ENCODE measurements at regions of chr7 and their contacts with region 1.

Region 1: DNA sequence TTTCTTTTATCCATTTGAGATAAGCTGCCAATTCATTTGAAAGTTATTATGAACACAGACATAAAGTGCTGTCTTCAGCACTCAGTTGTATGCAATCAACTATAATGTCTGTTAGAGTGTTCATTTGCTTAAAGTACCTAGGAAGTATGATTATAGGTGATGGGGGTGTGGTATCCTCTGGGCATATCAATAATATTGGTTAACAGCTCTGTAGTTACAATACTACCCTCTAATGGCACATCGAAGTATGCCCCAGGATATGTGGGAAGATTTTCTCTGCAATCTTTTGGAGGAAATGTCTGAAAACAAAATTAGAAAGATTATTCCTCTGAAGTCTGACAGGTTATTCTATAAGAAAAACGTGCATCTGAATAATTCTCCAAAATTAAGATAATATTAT is 429.7 kb downstream of the ARL4A start:
- DNase-seq: no peak
- H3K4me3 ChIP-seq: no peak overlapping the region
- H3K27ac ChIP-seq: no peak overlapping the region
- H3K4me1 ChIP-seq: peaks cover 7% of the 10 kb centered on the region
- H3K27me3 ChIP-seq: no peaks in the 10 kb centered on the region
- CTCF ChIP-seq: peak; percentile 42 to 63

Region 2: DNA sequence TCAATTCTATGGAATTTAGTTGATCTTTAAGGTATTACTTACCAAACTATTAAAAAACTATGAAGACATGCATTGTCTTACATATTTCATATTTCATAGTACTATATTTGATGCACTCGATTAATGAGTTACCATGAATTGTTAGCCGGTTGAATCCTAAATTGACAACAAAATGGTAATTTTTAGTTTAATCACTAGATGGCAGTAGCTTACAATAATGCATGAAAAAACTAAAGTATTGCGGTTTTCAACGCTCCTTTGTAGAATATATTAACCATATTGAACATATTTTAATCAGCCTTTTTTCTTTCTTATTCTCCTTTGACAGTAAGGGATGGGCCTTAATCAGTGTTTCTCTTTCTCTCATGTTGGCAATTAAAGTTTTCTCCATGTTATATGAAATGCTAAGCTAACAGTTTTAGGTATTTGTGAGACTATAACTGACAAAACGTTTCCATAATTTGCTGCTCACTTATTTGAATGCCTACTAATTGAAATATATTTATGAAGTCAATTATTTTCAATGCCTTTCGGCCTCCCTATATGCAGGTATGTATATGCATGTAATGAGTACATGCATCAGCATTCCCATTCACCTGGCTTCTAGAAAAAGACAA is 478.1 kb before region 1 on chr7:
- CTCF ChIA-PET with region 1: no interaction called
- dilution Hi-C with region 1: no loop called
- in situ Hi-C with region 1: no loop called
- intact Hi-C with region 1: loop called (anchors 1 kb)
- DNase-seq: peak; percentile 32
- H3K4me3 ChIP-seq: no peak overlapping the region
- H3K27ac ChIP-seq: no peak overlapping the region
- H3K4me1 ChIP-seq: no peaks in the 10 kb centered on the region
- H3K27me3 ChIP-seq: no peaks in the 10 kb centered on the region
- CTCF ChIP-seq: peak; percentile 56 to 61

Region 3: GRCh38 chr7:12929476-12930140 is 187.5 kb before region 1 on chr7:
- CTCF ChIA-PET with region 1: no interaction called
- dilution Hi-C with region 1: no loop called
- in situ Hi-C with region 1: no loop called
- intact Hi-C with region 1: loop called (anchors 10 kb)
- DNase-seq: no peak
- H3K4me3 ChIP-seq: no peak overlapping the region
- H3K27ac ChIP-seq: no peak overlapping the region
- H3K4me1 ChIP-seq: peaks cover 3% of the 10 kb centered on the region
- H3K27me3 ChIP-seq: no peaks in the 10 kb centered on the region
- CTCF ChIP-seq: no peak

Region 4: DNA sequence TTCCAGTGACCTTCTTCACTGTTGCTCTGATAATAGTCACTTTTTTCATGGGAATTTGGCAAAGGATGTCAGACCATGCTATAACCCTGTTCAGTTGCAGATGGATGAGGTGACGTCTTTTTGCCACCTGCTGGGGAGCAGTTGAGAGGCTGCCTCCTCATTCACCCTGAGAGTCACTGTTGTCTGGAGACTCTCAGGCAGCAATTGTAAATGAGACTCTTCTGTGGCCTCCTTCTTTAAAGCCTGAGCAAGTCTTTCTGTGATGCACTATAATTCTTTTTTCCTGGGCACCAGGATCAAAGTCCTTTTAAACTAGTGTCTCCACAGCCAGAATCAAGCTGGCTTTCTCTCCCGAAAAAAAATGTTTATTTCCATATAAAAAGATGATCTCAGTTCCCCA is 84.5 kb before region 1 on chr7:
- CTCF ChIA-PET with region 1: no interaction called
- dilution Hi-C with region 1: no loop called
- in situ Hi-C with region 1: no loop called
- intact Hi-C with region 1: no loop called
- DNase-seq: no peak
- H3K4me3 ChIP-seq: no peak overlapping the region
- H3K27ac ChIP-seq: no peak overlapping the region
- H3K4me1 ChIP-seq: peaks cover 26% of the 10 kb centered on the region
- H3K27me3 ChIP-seq: no peaks in the 10 kb centered on the region
- CTCF ChIP-seq: no peak

Region 5: DNA sequence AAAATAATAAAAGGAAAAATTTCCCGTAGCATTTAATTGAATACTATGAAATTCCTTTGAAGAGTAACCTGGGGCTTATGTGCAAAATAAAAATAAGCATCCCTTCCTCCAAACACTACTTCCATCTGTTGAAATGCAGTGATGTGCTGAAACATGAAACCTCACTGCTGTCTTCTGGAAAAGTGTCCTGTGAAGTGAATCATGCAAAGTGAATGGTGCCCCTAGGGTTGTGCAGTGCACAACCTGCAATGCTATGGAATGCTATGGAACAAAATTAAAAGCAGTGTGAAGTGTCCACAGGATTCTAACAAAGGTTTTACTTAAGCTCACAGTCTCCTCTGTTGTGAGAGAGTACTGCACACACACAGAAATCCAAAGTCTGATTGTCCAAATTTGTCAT is 391.5 kb after region 1 on chr7:
- CTCF ChIA-PET with region 1: no interaction called
- dilution Hi-C with region 1: no loop called
- in situ Hi-C with region 1: no loop called
- intact Hi-C with region 1: no loop called
- DNase-seq: no peak
- H3K4me3 ChIP-seq: no peak overlapping the region
- H3K27ac ChIP-seq: no peak overlapping the region
- H3K4me1 ChIP-seq: no peaks in the 10 kb centered on the region
- H3K27me3 ChIP-seq: no peaks in the 10 kb centered on the region
- CTCF ChIP-seq: no peak